ENCODE measurements at regions of chr16 and their contacts with region 1.

Region 1: DNA sequence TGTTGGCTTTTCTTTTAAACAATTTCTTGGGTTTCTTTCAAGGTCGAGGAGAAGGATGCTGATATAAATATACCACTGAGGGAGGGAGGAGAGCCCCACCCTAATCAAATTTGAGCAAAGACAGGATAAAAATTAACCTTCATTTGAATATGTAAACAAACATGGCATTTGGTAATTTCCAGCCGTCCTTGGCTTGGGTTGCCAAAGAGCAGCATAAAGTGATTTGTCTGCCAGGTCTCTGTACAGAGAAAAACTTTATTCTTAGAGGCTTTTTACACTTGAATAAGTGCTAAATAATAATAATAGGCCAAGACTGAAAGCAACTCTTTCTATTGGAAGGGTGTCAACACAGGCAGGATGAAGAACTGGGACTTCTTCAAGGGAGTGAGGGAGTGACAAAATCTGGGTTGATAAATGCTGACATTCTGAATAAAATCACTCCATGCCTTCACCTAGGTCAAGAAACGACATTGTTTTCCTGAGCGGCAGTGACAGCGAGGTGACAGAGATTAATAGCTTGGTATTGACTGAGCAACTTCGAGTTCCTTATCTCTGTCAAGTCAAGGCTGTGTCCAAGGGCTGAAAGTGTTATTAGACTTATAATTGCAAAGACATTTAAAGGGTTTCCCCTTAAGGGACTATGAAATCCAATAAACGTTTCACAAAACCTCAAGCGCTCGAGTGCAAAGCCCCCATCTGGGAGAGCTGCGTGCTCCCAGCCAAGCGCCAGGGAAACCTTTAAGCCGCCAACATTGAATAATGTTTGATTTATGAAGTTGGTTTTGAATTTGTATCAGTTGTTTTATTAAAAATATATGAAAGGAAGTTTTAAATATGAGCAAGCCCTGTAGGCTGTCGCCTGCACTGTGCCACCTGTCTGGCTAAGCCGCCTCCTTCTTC is 269.5 kb upstream of the N4BP1 start:
- DNase-seq: no peak
- H3K4me3 ChIP-seq: no peak overlapping the region
- H3K27ac ChIP-seq: no peak overlapping the region
- H3K4me1 ChIP-seq: no peaks in the 10 kb centered on the region
- H3K27me3 ChIP-seq: no peaks in the 10 kb centered on the region
- CTCF ChIP-seq: no peak
- EP300 ChIP-seq: no peak
- POLR2A ChIP-seq: no peak
- RAD21 ChIP-seq: no peak

Region 2: DNA sequence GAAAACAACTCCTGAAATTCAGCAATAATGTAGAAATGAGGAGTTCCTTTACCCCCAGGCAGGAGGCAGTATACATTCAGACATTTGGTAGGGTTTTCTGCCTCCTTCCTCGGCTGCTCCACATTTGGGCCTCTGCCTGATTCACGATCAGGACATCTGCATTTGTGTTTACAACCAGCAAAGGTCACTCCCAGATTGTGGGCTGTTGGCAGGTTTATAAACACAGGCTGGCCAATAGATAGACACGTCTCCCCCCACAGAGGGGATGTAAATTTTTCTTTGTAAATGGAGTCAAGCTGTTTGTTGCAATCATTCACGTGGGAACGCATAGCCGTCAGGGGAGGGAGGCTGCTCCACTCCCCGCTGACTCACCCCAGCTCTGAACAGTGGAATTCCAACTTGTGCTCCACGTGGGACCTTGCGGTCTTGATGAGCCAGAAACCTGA is 17.4 kb before region 1 on chr16:
- CTCF ChIA-PET with region 1: interaction called, 14 read pairs
- POLR2A ChIA-PET with region 1: no interaction called
- DNase-seq: peak; percentile 29 to 46
- H3K4me3 ChIP-seq: no peak overlapping the region
- H3K27ac ChIP-seq: no peak overlapping the region
- H3K4me1 ChIP-seq: peaks cover 0 to 2% (median under 1%) of the 10 kb centered on the region in 4 experiments; a peak in 1 of 7 replicates
- H3K27me3 ChIP-seq: no peaks in the 10 kb centered on the region
- CTCF ChIP-seq: peak in 2 of 3 experiments; percentile 50 to 52; a peak in 3 of 4 replicates
- EP300 ChIP-seq: no peak
- POLR2A ChIP-seq: no peak
- RAD21 ChIP-seq: peak; percentile 53 to 67

Region 3: DNA sequence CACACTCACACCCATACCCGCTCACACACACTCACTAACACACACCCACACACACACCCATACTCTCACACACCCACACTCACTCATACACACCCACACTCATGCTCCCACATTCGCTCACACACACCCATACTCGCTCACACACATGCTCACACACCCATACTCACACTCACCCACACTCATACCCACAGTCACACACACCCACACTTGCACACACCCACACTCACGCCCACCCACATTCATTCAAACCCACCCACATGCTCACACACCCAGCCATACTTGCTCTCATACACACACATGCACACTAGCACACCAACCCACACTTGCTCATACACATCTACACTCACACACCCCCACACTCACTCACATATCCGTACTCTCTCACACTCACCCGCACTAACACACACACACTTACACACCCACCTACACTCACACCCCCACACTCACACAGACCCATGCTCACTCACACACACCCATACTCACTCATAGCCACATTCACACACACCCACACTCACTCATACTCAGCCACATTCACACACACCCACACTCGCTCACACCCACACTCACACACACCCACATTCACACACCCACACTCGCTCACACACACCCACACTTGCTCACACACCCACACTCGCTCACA is 52.9 kb after region 1 on chr16:
- CTCF ChIA-PET with region 1: no interaction called
- POLR2A ChIA-PET with region 1: no interaction called
- DNase-seq: no peak
- H3K4me3 ChIP-seq: no peak overlapping the region
- H3K27ac ChIP-seq: no peak overlapping the region
- H3K4me1 ChIP-seq: no peaks in the 10 kb centered on the region
- H3K27me3 ChIP-seq: peaks cover 0 to 2% (median 0%) of the 10 kb centered on the region in 4 experiments; a peak in 2 of 7 replicates
- CTCF ChIP-seq: no peak
- EP300 ChIP-seq: no peak
- POLR2A ChIP-seq: no peak
- RAD21 ChIP-seq: no peak

Measured in H1 (cell line).